WTC11 (cell line): ENCODE measurements at regions of chr7 and their contacts with region 1.

Region 1: DNA sequence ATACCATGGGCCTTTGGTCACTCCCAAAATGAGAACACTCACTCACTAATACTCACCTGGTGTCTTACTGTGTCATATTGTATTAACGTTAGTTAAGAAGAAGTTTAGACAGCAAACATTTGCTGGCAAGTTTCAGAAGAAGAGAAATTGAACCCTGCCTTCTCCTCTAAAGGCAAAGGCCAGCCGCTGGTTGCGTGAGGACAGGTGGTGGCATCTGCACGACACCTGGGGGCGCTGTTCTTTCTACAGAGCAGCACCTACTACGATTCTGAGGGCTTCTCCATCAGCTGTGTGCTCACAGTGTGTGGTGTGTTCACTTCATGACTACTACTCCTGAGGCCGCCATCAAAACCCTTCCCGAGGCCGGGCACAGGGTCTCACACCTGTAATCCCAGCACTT is 17.9 kb upstream of the CLEC2L start:
- DNase-seq: peak; percentile 82
- ATAC-seq: peak; percentile 93
- H3K4me3 Mint-ChIP-seq: no peak overlapping the region
- H3K27ac Mint-ChIP-seq: no peak overlapping the region
- H3K4me1 Mint-ChIP-seq: peaks cover 13% of the 10 kb centered on the region
- H3K27me3 Mint-ChIP-seq: peaks cover 2% of the 10 kb centered on the region; the same call in 1 of the 2 replicates
- CTCF ChIP-seq: peak; percentile 91

Region 2: GRCh38 chr7:139340037-139340807 is 165.3 kb before region 1 on chr7:
- CTCF ChIA-PET with region 1: no interaction called
- POLR2A ChIA-PET with region 1: no interaction called
- DNase-seq: peak; percentile 94
- ATAC-seq: peak; percentile 70
- H3K4me3 Mint-ChIP-seq: peak overlapping the region; percentile 92
- H3K27ac Mint-ChIP-seq: peak overlapping the region; percentile 99
- H3K4me1 Mint-ChIP-seq: peaks cover 7% of the 10 kb centered on the region
- H3K27me3 Mint-ChIP-seq: peaks cover 9% of the 10 kb centered on the region
- CTCF ChIP-seq: peak; percentile 34; the same call in 1 of the 2 replicates

Region 3: GRCh38 chr7:139494835-139495579 is 10.6 kb before region 1 on chr7:
- CTCF ChIA-PET with region 1: interaction called, 20 read pairs
- POLR2A ChIA-PET with region 1: no interaction called
- DNase-seq: no peak
- ATAC-seq: no peak
- H3K4me3 Mint-ChIP-seq: no peak overlapping the region
- H3K27ac Mint-ChIP-seq: no peak overlapping the region
- H3K4me1 Mint-ChIP-seq: 0 out of 2 replicates have a peak, but pooled peaks cover 3% of the 10 kb centered on the region
- H3K27me3 Mint-ChIP-seq: peaks cover 16% of the 10 kb centered on the region
- CTCF ChIP-seq: no peak

Region 4: DNA sequence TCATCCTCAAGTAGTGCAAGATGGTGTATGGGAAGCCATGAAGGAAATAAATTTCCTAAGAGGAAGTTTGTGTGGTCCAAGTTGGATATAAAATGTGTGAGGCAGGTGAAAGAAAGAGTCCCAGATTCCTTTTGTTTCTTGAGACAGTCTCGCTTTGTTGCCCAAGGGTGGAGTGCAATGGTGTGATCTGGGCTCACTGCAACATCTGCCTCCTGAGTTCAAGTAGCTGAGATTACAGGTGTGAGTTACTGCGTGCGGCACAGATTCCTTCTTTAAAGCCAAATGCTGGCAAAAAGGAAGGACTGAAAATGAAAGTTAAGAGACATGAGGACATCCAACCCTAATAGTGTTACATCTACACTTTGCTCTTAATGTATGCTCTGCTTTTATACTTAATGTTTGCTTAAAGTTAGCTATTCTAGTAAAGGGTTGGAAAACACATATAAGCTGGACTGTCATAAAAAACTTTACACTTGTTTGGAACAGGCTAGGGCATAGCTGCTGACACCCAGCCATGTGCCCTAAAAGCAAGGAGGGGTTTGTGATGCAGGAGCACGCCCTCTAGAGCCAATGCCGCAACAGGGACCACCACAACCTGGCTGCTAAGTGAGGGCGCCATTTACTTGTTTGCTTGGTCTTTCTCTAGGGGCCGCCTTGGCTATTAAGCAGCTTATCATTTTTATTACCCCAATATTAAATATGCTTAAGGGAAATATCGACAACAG is 52.5 kb after region 1 on chr7:
- CTCF ChIA-PET with region 1: interaction called, 25 read pairs
- POLR2A ChIA-PET with region 1: no interaction called
- DNase-seq: peak; percentile 49
- ATAC-seq: peak; percentile 73
- H3K4me3 Mint-ChIP-seq: no peak overlapping the region
- H3K27ac Mint-ChIP-seq: no peak overlapping the region
- H3K4me1 Mint-ChIP-seq: peaks cover 18% of the 10 kb centered on the region
- H3K27me3 Mint-ChIP-seq: no peaks in the 10 kb centered on the region; the same call in 1 of the 2 replicates
- CTCF ChIP-seq: no peak

Region 5: DNA sequence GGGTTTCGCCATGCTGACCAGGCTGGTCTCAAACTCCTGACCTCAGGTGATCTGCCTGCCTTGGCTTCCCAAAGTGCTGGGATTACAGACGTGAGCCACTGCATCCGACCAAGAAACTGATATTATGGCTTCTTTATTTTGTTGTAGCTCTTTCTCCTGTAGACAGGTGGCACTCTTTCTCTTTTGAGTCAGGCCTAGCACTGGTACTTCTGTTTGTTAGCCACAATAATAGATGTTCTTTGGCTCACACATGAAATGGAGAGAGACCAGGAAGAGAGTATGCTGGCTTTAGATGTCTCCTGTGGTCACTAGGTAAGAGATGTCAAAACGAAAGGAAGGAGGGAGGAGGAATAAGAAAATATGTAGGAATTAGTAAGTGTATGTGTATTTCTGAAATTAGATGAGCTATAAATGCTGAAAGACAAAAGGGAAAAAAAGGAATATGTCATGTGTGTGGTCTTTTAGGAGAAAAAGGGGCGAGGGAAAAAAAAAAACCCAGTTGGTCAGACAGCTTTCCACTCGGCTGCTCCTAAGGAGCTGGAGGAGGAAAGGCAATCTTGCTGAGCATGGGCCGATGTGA is 96.7 kb after region 1 on chr7:
- CTCF ChIA-PET with region 1: interaction called, 22 read pairs
- POLR2A ChIA-PET with region 1: no interaction called
- DNase-seq: no peak
- ATAC-seq: peak; percentile 83
- H3K4me3 Mint-ChIP-seq: no peak overlapping the region
- H3K27ac Mint-ChIP-seq: no peak overlapping the region
- H3K4me1 Mint-ChIP-seq: no peaks in the 10 kb centered on the region
- H3K27me3 Mint-ChIP-seq: no peaks in the 10 kb centered on the region
- CTCF ChIP-seq: peak; percentile 53

Region 6: GRCh38 chr7:139620676-139621344 is 115.2 kb after region 1 on chr7:
- CTCF ChIA-PET with region 1: interaction called, 16 read pairs
- POLR2A ChIA-PET with region 1: no interaction called
- DNase-seq: peak; percentile 84
- ATAC-seq: peak; percentile 97
- H3K4me3 Mint-ChIP-seq: no peak overlapping the region
- H3K27ac Mint-ChIP-seq: no peak overlapping the region; the same call in 1 of the 2 replicates
- H3K4me1 Mint-ChIP-seq: no peaks in the 10 kb centered on the region
- H3K27me3 Mint-ChIP-seq: no peaks in the 10 kb centered on the region
- CTCF ChIP-seq: peak; percentile 67